ENCODE measurements at regions of chr13 and their contacts with region 1.

Region 1: GRCh38 chr13:49443704-49444523 is at the starts of genes CAB39L and SETDB2:
- DNase-seq: peak; percentile 99
- H3K4me3 Mint-ChIP-seq: peak within 1 kb of the TSS; percentile 95
- H3K27ac Mint-ChIP-seq: peak within 1 kb of the TSS; percentile 99
- H3K4me1 Mint-ChIP-seq: peaks cover 66% of the 10 kb centered on the region
- H3K27me3 Mint-ChIP-seq: peaks cover 5% of the 10 kb centered on the region
- total RNA-seq, gene CAB39L: 7.0 and 7.1 TPM in 2 replicates
- total RNA-seq, gene SETDB2: 13.0 and 14.6 TPM in 2 replicates

Region 2: GRCh38 chr13:49110122-49110912 is 333.6 kb before region 1 on chr13:
- intact Hi-C with region 1: loop called (anchors 1 kb)
- DNase-seq: peak; percentile 71
- H3K4me3 Mint-ChIP-seq: peak overlapping the region; percentile 87
- H3K27ac Mint-ChIP-seq: peak overlapping the region; percentile 70
- H3K4me1 Mint-ChIP-seq: peaks cover 31% of the 10 kb centered on the region
- H3K27me3 Mint-ChIP-seq: no peaks in the 10 kb centered on the region

Region 3: DNA sequence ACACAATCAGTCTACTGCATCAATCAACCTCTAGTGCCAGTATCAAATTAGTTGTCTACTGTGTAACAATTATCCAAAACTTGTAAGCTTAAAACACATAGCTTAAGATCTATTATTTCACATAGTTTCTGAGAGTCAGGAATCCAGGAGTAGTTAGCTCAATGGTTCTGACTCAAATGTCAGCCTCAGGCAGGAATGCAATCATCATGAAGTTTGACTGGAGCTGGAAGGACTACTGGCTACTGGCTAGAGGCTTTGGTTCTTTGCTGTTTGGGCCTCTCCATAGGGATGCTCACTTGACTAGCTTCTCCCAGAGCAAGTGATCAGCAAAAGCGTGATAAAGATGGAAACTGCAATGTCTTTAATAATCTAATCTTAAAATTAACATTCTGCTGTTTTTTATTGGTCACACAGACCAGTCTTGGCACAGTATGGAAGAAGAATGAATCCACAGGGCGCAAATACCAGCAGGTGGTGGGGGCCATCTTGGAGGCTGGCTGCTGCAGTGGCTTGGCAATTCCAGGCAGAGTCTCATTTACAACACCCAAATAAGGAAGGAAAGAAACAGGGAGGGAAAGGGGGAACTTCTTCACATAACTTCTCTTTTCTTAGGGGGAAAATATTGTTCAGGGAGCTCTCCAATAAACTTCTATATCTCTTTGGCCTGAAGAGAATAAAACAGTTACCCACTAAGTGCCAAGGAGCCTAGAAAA is 15.7 kb before region 1 on chr13:
- intact Hi-C with region 1: no loop called
- DNase-seq: no peak
- H3K4me3 Mint-ChIP-seq: no peak overlapping the region
- H3K27ac Mint-ChIP-seq: no peak overlapping the region
- H3K4me1 Mint-ChIP-seq: no peaks in the 10 kb centered on the region
- H3K27me3 Mint-ChIP-seq: no peaks in the 10 kb centered on the region

Region 4: DNA sequence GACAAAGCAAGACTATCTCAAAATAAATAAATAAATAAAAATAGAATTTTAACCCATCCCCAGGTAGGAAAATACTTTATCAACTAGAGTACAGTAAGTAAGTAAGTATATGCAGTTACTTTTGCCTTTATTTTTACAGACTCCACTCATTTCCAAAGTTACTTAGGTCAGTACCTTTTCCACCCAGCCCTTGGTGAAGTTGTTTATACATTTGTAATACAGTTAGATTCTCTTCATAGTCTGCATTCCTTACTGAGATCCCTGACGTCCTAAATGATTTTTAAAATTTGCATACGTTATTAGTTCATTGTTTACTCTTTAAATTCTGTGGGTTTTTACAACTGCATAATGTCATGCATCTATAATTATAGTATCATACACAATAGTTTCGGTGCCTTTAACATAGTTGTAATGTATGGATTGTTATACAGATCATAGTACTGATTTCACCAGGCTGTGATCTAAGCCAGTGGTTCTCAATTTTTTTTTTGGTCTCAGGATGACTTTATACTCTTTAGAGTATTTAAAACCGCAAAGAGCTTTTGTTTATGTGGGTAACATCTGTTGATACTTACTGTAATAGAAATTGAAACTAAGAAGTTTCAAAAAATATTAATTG is 10.6 kb after region 1 on chr13:
- intact Hi-C with region 1: loop called (anchors 1 kb)
- DNase-seq: no peak
- H3K4me3 Mint-ChIP-seq: no peak overlapping the region
- H3K27ac Mint-ChIP-seq: peak overlapping the region; percentile 77
- H3K4me1 Mint-ChIP-seq: peaks cover 35% of the 10 kb centered on the region
- H3K27me3 Mint-ChIP-seq: no peaks in the 10 kb centered on the region

Region 5: DNA sequence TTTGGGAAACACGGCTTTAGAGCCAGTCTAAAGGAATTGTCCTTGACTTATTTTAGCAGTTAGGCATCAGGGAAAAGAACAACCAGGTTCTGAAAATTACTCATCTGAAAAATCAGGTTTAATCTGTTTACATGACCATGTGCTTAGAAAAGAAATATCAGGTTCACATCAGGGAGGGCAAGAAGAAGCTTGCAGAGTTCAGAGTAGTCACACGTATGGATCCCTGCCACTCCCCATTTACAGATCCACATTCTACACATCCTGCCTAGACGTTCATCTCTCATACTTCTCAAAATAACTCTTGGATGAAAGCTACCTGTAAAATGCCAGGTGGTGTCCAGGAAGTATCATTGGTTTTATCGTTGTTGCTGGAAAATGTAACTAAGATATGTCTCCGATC is 37.9 kb after region 1 on chr13:
- intact Hi-C with region 1: no loop called
- DNase-seq: no peak
- H3K4me3 Mint-ChIP-seq: no peak overlapping the region
- H3K27ac Mint-ChIP-seq: no peak overlapping the region
- H3K4me1 Mint-ChIP-seq: no peaks in the 10 kb centered on the region
- H3K27me3 Mint-ChIP-seq: no peaks in the 10 kb centered on the region

Region 6: GRCh38 chr13:49517461-49517860 is 73.5 kb after region 1 on chr13:
- intact Hi-C with region 1: no loop called
- DNase-seq: no peak
- H3K4me3 Mint-ChIP-seq: no peak overlapping the region
- H3K27ac Mint-ChIP-seq: no peak overlapping the region
- H3K4me1 Mint-ChIP-seq: peaks cover 17% of the 10 kb centered on the region
- H3K27me3 Mint-ChIP-seq: no peaks in the 10 kb centered on the region

Region 7: GRCh38 chr13:49560270-49561050 is 116.5 kb after region 1 on chr13:
- intact Hi-C with region 1: no loop called
- DNase-seq: no peak
- H3K4me3 Mint-ChIP-seq: no peak overlapping the region
- H3K27ac Mint-ChIP-seq: no peak overlapping the region
- H3K4me1 Mint-ChIP-seq: no peaks in the 10 kb centered on the region
- H3K27me3 Mint-ChIP-seq: no peaks in the 10 kb centered on the region

Region 8: DNA sequence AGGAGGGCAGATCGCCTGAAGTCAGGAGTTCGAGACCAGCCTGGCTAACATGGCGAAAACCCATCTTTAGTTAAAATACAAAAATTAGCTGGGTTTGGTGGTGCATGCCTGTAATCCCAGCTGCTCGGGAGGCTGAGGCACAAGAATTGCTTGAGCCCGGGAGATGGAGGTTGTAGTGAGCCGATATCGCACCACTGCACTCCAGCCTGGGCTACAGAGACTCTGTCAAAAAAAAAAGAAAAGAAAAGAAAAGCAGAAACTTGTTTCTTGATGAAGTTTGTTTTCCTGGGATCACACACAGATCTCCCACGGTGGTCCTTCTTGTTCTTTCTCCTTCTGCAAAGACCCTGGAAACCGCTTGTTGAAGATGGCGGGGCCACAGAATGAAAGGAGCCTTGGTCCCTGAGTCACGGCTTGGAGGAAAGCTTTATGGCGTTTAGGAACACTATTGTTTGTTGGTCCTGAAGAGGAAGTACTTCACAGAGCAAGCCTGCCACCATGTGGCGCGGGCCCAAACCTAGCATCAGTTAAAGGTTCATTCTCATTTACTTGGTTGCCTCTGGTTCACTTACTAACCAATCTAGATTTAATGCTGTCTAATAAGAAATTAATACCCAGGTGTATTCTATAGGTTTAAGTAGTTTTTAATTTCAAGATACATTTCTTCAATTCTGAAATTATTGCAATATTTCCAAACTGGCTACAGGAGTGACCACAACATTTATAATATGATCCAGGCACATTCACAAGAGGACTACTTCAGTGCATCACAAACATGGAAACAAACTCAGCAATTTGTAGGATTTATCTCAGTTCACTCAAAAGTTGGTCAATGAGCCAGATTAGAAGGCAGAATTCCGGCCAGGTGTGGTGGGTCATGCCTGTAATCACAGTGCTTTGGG is 163.1 kb after region 1 on chr13:
- intact Hi-C with region 1: loop called (anchors 2 kb)
- DNase-seq: peak; percentile 69
- H3K4me3 Mint-ChIP-seq: peak overlapping the region; percentile 80
- H3K27ac Mint-ChIP-seq: peak overlapping the region; percentile 76
- H3K4me1 Mint-ChIP-seq: peaks cover 13% of the 10 kb centered on the region
- H3K27me3 Mint-ChIP-seq: no peaks in the 10 kb centered on the region

Region 9: GRCh38 chr13:49936085-49936940 is 492.4 kb after region 1 on chr13 and contains the start of gene SPRYD7:
- intact Hi-C with region 1: loop called (anchors 2 kb)
- DNase-seq: peak; percentile 92
- H3K4me3 Mint-ChIP-seq: peak within 1 kb of the TSS; percentile 94
- H3K27ac Mint-ChIP-seq: peak within 1 kb of the TSS; percentile 87
- H3K4me1 Mint-ChIP-seq: peaks cover 11% of the 10 kb centered on the region
- H3K27me3 Mint-ChIP-seq: peaks cover 22% of the 10 kb centered on the region
- total RNA-seq, gene SPRYD7: 6.9 and 7.0 TPM in 2 replicates

Region 10: DNA sequence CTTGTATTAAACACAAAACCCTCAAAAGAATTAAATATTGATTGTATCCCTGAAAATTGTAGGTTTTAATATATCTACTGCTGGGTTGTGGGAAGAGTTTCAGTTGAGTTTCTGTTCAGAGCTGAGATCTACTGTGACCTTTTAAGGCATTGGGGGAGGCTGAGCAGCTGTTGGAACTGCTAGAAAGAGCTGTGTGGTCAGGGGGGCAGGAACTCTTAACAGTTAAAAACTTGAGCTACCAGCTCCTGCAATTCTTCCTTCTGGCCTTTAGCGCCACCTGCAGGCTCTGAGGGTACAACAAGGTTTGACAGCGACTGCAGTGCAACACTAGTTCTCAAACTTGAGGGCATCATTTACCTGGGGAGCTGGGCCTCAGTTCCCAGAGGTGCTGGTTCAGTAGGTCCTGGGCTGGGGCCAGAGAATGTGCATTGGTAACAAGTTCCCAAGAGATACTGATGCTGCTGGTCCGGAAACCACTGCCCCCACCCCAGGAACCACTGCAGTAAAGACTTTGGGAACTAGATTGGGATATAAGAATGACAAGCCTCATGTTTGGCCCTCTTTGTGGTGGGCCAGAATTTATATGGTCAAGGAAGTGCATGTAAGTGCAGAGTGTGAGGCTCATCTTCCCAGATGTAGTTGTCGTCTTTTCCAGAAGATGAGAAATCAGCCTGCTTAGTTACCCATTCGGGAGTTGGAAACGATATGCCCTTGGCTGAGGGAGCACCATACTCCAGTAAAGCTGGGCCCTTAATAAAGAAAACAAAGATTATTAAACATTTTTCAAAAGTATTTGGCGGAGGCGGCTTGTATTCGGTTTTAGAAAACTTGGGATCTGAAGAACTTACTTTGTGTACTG is 1468.3 kb after region 1 on chr13:
- intact Hi-C with region 1: loop called (anchors 10 kb)
- DNase-seq: peak; percentile 87
- H3K4me3 Mint-ChIP-seq: peak overlapping the region; percentile 82
- H3K27ac Mint-ChIP-seq: peak overlapping the region; percentile 37
- H3K4me1 Mint-ChIP-seq: peaks cover 68% of the 10 kb centered on the region
- H3K27me3 Mint-ChIP-seq: no peaks in the 10 kb centered on the region

Measured in activated T-helper 1 cell treated with anti-CD3 and anti-CD28 coated beads, Interleukin-12 subunit alpha, Interleukin-12 subunit beta, Interleukin-2, Interleukin-4 antibody, amounts not matched to agents 30 ng/mL and 10 ng/mL and 1 ng/mL, durations not matched to agents 14 hours and 24 hours and 36 hours (primary cell).